ENCODE measurements at regions of chr16 and their contacts with region 1.

Region 1: GRCh38 chr16:88569985-88570690 is at the start of gene ZC3H18:
- DNase-seq: peak; percentile 98
- H3K4me3 Mint-ChIP-seq: peak within 1 kb of the TSS; percentile 76
- H3K27ac Mint-ChIP-seq: peak within 1 kb of the TSS; percentile 64
- H3K4me1 Mint-ChIP-seq: peaks cover 42% of the 10 kb centered on the region
- H3K27me3 Mint-ChIP-seq: no peaks in the 10 kb centered on the region
- total RNA-seq, gene ZC3H18: 75.9 to 78.6 TPM

Region 2: DNA sequence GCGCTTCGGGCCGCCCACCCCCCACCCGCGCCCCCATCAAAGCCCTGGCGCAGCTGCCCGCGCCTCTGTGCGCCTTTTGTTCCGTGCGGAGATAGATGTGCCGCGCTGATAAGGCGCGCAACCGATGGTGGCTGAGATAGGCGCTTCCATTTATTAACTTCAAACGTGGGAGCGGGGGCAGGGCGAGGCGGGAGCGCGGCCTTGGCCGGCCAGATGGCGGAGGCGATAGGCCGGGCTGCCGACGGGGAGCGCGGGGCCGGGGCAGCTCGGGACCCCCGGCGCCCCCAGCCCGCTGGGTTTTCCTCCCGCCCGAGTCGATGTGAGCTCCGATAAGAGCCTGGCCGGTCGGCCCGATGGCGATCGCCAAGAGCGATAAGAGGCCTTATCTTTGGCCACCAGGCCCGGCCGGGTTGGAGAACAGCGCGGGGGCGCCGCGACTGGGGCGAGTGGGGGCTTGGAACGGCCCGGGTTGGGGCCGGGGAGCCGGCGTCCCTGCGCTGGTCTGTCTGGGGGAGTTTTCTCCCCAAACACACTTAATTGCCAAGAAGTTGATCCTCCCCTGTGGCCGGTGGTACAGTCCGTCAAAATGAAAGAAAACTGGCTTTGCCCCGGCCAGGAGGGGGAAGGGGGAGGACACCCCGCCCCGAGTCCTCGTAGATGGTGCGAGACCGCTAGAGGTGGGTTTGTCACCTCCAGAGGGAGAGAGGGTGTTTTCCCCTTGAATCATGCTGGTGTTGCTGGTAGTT is 114.4 kb before region 1 on chr16:
- CTCF ChIA-PET with region 1: interaction called, 3 read pairs
- POLR2A ChIA-PET with region 1: interaction called, 12 read pairs
- DNase-seq: peak; percentile 77
- H3K4me3 Mint-ChIP-seq: peak overlapping the region; percentile 71
- H3K27ac Mint-ChIP-seq: peak overlapping the region; percentile 77
- H3K4me1 Mint-ChIP-seq: peaks cover 26% of the 10 kb centered on the region
- H3K27me3 Mint-ChIP-seq: peaks cover 4% of the 10 kb centered on the region

Region 3: GRCh38 chr16:88468275-88469141 is 101.6 kb before region 1 on chr16:
- CTCF ChIA-PET with region 1: no interaction called
- POLR2A ChIA-PET with region 1: no interaction called
- DNase-seq: no peak
- H3K4me3 Mint-ChIP-seq: no peak overlapping the region
- H3K27ac Mint-ChIP-seq: no peak overlapping the region
- H3K4me1 Mint-ChIP-seq: peaks cover 52% of the 10 kb centered on the region
- H3K27me3 Mint-ChIP-seq: no peaks in the 10 kb centered on the region

Region 4: DNA sequence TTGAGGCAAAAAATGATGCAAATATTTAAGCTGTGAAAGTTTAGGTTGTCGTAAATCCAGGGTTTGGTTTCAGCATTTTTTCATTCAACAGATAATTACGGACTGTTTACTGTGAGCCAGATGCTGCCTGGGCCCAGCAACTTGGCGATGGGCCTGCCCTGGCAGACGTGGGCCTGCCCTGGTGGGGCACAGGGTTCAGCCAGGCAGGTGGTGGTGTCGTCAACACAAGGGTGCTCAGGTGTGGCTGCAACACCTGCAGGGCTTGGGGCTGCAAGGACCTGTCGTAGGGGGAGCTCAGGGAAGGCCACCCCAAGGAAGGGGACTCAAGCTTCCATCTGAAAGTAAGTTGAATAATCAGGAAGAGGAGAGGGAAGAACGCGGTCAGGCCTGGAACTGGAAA is 15.1 kb after region 1 on chr16:
- CTCF ChIA-PET with region 1: interaction called, 6 read pairs
- POLR2A ChIA-PET with region 1: interaction called, 30 read pairs
- DNase-seq: no peak
- H3K4me3 Mint-ChIP-seq: no peak overlapping the region
- H3K27ac Mint-ChIP-seq: no peak overlapping the region
- H3K4me1 Mint-ChIP-seq: peaks cover 69% of the 10 kb centered on the region
- H3K27me3 Mint-ChIP-seq: no peaks in the 10 kb centered on the region

Region 5: DNA sequence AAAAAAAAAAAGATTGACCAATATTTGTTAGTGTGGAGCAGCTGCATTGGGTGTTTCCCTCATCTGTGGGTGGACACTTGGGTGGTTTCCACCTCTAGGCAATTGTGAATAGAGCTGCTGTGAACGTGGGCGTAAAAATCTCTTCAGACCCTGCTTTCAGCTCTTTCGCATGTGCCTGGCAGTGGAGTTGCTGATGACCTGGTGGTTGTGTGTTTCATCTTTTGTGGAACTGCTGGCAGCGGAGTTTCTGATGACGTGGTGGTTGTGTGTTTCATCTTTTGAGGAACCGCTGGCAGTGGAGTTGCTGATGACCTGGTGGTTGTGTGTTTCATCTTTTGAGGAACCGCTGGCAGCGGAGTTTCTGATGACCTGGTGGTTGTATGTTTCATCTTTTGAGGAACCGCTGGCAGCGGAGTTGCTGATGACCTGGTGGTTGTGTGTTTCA is 21.5 kb after region 1 on chr16:
- CTCF ChIA-PET with region 1: no interaction called
- POLR2A ChIA-PET with region 1: interaction called, 30 read pairs
- DNase-seq: peak; percentile 48
- H3K4me3 Mint-ChIP-seq: peak overlapping the region; percentile 40
- H3K27ac Mint-ChIP-seq: peak overlapping the region; percentile 76
- H3K4me1 Mint-ChIP-seq: peaks cover 60% of the 10 kb centered on the region
- H3K27me3 Mint-ChIP-seq: no peaks in the 10 kb centered on the region

Region 6: GRCh38 chr16:88619859-88620815 is 50.0 kb after region 1 on chr16:
- CTCF ChIA-PET with region 1: interaction called, 10 read pairs
- POLR2A ChIA-PET with region 1: interaction called, 20 read pairs
- DNase-seq: peak; percentile 86
- H3K4me3 Mint-ChIP-seq: peak overlapping the region; percentile 55
- H3K27ac Mint-ChIP-seq: peak overlapping the region; percentile 93
- H3K4me1 Mint-ChIP-seq: peaks cover 57% of the 10 kb centered on the region
- H3K27me3 Mint-ChIP-seq: no peaks in the 10 kb centered on the region

Region 7: DNA sequence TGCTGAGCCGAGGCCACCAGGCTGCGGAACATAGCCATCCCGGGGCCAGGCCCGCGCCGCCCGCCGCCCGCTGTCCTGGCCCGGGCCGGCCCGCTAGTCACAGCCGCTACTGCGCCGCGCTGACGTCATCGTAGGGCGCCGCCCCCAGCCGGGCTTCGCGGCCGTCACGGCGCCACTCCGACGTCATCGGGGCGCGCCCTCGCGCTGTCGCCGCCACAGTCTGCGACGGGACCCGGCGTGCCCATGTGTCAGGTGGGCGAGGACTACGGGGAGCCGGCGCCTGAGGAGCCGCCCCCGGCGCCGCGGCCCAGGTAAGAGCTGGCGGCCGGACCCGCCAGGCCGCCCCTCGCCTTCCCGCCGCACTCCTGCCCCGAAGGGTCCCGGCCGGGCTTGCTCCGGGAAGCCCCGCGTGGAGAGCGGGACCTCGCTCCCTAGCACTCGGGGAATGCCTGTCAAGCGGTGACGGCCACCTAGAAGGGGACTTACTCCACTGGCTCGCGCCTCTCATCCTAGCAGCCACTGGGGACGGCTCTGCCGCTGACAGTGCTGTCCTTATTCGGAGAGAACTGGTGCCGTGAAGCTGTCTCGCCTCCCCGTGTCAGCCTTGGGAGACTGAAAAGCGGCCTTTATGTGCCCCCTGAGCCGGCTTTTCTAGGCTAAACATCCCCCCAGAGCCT is 136.3 kb after region 1 on chr16 and contains the starts of genes CTU2 and RNF166:
- CTCF ChIA-PET with region 1: interaction called, 3 read pairs
- POLR2A ChIA-PET with region 1: interaction called, 12 read pairs
- DNase-seq: peak; percentile 93
- H3K4me3 Mint-ChIP-seq: peak within 1 kb of the TSS; percentile 95
- H3K27ac Mint-ChIP-seq: peak within 1 kb of the TSS; percentile 98
- H3K4me1 Mint-ChIP-seq: peaks cover 44% of the 10 kb centered on the region
- H3K27me3 Mint-ChIP-seq: no peaks in the 10 kb centered on the region
- total RNA-seq, gene CTU2: 16.5 to 17.3 TPM
- total RNA-seq, gene RNF166: 155 to 156 TPM

Measured in activated CD4-positive, alpha-beta memory T cell treated with anti-CD3 and anti-CD28 coated beads, Interleukin-2, amount 10 ng/mL, durations not matched to agents 7 days and 5 days (primary cell).